B cell (primary cell): ENCODE measurements at regions of chr19 and their contacts with region 1.

Region 1: DNA sequence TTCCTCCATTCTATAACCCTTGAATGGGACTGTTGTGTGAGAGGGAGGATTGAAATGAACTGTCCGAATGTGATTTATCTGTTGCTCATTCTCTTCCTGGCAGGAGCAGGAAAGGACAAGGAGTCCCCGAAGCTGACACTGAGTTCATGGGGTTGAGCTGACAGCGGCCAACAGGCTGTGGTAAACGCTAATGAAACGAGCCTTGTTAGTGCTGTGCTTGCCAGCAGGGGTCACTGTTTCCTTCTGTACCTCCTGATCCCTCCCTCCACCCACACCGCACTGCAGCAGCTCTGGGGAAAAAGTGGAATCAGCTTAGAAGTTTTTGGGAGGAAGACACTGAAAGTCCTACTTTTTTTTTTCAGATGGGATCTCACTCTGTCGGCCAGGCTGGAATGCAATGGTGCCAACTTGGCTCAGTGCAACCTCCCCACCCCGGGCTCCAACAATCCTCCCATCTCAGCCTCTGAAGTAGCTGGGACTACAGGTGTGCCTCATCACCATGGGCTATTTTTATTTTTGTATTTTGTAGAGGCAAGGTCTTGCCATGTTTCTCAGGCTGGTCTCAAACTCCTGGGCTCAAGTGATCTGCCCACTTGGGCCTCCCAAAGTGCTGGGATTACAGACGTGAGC is 6.7 kb upstream of the ZNF761 start:
- DNase-seq: peak; percentile 78
- ATAC-seq: peak; percentile 93
- H3K4me3 ChIP-seq: no peak overlapping the region
- H3K4me3 Mint-ChIP-seq: no peak overlapping the region
- H3K27ac ChIP-seq: no peak overlapping the region
- H3K27ac Mint-ChIP-seq: no peak overlapping the region
- H3K4me1 ChIP-seq: no peaks in the 10 kb centered on the region
- H3K4me1 Mint-ChIP-seq: peaks cover 3% of the 10 kb centered on the region
- H3K27me3 ChIP-seq: no peaks in the 10 kb centered on the region
- H3K27me3 Mint-ChIP-seq: no peaks in the 10 kb centered on the region
- CTCF ChIP-seq: peak; percentile 86

Region 2: DNA sequence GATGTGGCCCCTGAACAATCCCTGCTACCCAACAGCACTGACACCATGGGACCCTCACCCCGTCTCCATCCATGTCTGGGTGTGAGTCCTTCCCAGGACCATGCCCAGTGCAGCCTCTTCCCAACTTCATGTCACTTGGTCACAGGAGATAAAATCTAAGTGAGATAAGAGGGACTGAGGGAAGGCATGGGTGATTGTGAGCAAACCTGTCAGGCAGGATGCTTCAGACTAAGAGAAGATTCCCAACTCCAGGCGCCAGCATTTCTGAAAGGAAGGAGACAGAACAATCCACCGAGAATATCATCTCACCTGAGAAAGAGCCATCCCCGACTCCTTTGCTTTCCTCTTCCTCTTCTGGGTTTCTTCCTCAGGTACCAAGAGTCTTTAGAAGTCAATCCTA is 535.2 kb before region 1 on chr19:
- CTCF ChIA-PET with region 1: no interaction called
- POLR2A ChIA-PET with region 1: no interaction called
- intact Hi-C with region 1: no loop called
- DNase-seq: no peak
- ATAC-seq: no peak
- H3K4me3 ChIP-seq: no peak overlapping the region
- H3K4me3 Mint-ChIP-seq: no peak overlapping the region
- H3K27ac ChIP-seq: no peak overlapping the region
- H3K27ac Mint-ChIP-seq: no peak overlapping the region
- H3K4me1 ChIP-seq: no peaks in the 10 kb centered on the region
- H3K4me1 Mint-ChIP-seq: peaks cover 15% of the 10 kb centered on the region
- H3K27me3 ChIP-seq: no peaks in the 10 kb centered on the region
- H3K27me3 Mint-ChIP-seq: no peaks in the 10 kb centered on the region
- CTCF ChIP-seq: no peak

Region 3: DNA sequence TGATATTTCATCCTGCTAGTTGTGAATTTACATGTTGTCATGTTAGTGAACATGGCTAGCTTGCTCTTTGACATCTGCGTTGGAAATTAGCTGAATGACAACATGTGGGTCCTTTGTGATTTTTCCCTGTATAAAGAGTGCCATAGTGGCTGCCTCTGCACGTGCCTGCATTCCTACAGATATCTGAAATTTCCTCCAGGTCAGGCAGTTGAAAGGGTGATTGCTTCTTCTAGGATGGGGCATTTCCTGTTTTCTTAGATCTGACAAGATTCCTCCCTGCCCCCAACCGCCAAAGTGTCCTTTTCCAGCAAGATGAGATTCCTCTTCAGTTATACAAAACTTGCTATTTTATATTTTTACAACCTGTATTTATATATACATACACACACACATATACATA is 50.8 kb before region 1 on chr19:
- CTCF ChIA-PET with region 1: no interaction called
- POLR2A ChIA-PET with region 1: no interaction called
- intact Hi-C with region 1: no loop called
- DNase-seq: no peak
- ATAC-seq: no peak
- H3K4me3 ChIP-seq: no peak overlapping the region
- H3K4me3 Mint-ChIP-seq: no peak overlapping the region
- H3K27ac ChIP-seq: no peak overlapping the region
- H3K27ac Mint-ChIP-seq: no peak overlapping the region
- H3K4me1 ChIP-seq: no peaks in the 10 kb centered on the region
- H3K4me1 Mint-ChIP-seq: no peaks in the 10 kb centered on the region
- H3K27me3 ChIP-seq: no peaks in the 10 kb centered on the region
- H3K27me3 Mint-ChIP-seq: no peaks in the 10 kb centered on the region
- CTCF ChIP-seq: no peak

Region 4: GRCh38 chr19:53511933-53512374 is 86.9 kb after region 1 on chr19:
- CTCF ChIA-PET with region 1: interaction called, 14 read pairs
- POLR2A ChIA-PET with region 1: no interaction called
- intact Hi-C with region 1: loop called (anchors 1 kb)
- DNase-seq: peak; percentile 68
- ATAC-seq: peak; percentile 76
- H3K4me3 ChIP-seq: no peak overlapping the region
- H3K4me3 Mint-ChIP-seq: no peak overlapping the region
- H3K27ac ChIP-seq: no peak overlapping the region
- H3K27ac Mint-ChIP-seq: no peak overlapping the region
- H3K4me1 ChIP-seq: no peaks in the 10 kb centered on the region
- H3K4me1 Mint-ChIP-seq: peaks cover 3% of the 10 kb centered on the region
- H3K27me3 ChIP-seq: peaks cover 0 to 4% (median 0%) of the 10 kb centered on the region in 4 experiments
- H3K27me3 Mint-ChIP-seq: peaks cover 11% of the 10 kb centered on the region
- CTCF ChIP-seq: peak; percentile 74